Activated CD4-positive, alpha-beta T cell treated with anti-CD3 and anti-CD28 coated beads, Interleukin-2, amount 10 ng/mL, durations not matched to agents 24 days and 14 days (primary cell): ENCODE measurements at regions of chr7 and their contacts with region 1.

Region 1: GRCh38 chr7:7640221-7641128 is at the start of gene UMAD1:
- DNase-seq: peak; percentile 99
- H3K4me3 Mint-ChIP-seq: peak within 1 kb of the TSS; percentile 97
- H3K27ac Mint-ChIP-seq: peak within 1 kb of the TSS; percentile 97
- H3K4me1 Mint-ChIP-seq: peaks cover 31% of the 10 kb centered on the region
- H3K27me3 Mint-ChIP-seq: no peaks in the 10 kb centered on the region
- total RNA-seq, gene UMAD1: 11.8 and 12.4 TPM in 2 replicates

Region 2: DNA sequence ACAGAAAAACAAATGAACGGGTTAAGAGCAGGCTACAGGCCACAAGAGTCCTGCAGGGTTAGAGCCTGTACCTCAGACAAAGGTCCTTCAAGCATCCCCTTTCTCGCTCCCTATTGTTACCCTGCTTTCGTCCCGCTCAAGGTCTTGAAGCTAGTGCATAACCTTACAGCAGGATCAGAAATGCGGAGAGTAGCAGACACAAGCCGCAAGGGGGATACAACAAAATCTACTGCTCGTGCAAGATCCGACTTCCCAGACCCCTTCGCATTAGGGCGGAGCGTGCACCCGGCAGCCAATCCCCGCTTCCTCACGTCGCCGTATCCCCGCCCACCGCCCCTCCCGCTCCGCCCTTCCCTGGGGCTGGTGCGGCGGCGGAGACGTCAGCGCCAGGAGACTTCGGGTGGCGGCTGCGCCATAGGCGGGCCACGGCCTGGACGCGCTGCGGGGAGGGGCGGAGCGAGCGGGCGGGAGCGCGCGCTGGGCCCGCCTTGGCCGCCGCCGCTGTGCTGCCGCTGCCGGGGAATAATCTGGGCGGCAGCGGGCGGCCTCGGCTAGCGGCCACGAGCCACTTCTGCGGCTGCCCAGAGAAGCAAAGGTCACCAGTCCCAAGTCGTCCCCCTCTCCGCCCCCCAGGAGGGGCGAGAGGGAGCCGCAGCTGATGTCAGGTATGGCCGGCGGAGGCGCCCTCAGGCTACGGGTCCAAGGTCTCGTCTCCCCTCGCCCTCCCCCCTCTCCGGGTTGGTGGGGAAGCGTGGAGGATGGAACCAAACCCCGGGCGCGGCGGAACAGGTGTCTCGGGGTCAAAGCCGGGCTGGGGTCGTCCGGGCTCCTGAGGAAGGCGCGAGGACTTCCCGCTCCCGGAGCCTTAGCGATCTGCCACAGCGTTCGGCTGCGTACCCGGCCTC is 458.1 kb before region 1 on chr7 and contains the start of gene C1GALT1:
- intact Hi-C with region 1: loop called (anchors 1 kb)
- DNase-seq: peak; percentile 98
- H3K4me3 Mint-ChIP-seq: peak within 1 kb of the TSS; percentile 96
- H3K27ac Mint-ChIP-seq: peak within 1 kb of the TSS; percentile 99
- H3K4me1 Mint-ChIP-seq: peaks cover 27% of the 10 kb centered on the region
- H3K27me3 Mint-ChIP-seq: no peaks in the 10 kb centered on the region
- total RNA-seq, gene C1GALT1: 37.2 and 39.3 TPM in 2 replicates

Region 3: DNA sequence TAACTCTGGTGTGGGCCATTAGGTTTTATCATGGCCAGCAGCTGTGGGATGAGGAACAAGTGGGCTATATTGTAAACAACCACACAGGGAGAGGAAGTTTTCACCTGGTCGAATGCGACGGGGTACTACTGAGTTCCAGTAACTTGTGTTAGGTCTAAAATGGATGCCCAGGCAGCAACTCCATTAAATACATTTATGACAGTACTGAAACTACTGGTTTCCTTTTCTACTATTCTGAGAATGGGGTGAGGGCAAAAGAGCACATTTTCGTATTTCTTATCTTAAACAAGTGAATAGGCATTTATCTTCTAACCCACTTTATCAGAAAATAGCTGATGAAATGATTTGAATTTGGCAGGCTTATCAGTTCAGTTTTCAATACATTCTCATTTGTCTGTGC is 348.4 kb before region 1 on chr7:
- intact Hi-C with region 1: no loop called
- DNase-seq: no peak
- H3K4me3 Mint-ChIP-seq: no peak overlapping the region
- H3K27ac Mint-ChIP-seq: no peak overlapping the region
- H3K4me1 Mint-ChIP-seq: no peaks in the 10 kb centered on the region
- H3K27me3 Mint-ChIP-seq: no peaks in the 10 kb centered on the region

Region 4: DNA sequence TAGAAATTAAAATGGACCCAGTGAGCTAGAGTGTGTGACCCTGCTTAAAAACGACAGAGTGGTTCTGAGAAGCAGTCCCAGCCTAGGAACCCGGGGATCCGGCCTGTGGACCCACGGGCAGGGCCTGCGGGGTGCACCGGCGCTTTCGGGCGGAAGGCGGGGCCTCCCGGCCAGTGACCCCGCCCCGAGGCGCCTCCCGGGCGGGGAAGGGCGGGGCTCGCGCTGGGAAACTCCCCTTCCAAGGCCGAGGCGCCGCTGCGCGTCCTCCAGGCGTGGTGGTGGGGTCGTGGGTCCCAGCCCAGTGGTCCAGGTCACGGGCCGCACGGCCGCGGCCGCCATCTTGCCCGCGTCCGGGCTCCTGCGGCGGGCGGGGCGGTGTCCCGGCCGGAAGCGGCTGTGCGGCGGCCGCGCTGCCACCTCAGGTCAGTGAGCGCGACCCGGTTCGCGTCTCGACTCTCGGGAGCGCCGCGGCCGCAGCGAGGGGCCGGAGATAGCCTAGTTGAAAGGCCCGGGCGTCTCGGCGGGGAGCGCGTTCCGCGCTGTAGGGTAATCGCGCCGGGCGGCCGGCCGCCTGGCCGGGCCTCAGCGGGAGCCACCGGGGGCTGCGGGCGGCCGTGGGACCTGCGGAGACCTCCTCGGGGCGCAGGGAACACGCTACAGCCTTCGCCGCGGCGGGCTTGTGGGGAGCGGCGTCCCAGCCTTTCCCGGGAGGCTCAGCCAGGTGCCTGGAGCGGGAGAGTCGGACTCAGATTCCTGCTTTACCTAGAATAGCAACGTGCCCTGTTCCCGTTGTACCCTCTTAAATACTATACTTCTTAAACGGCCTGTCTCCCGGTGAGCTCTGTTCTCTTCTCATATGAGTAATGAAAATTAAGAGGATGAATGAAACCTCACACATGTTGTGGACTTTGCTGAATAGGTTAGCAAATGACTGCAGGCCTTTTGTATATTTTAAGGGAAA is 73.5 kb before region 1 on chr7 and contains the start of gene MIOS:
- intact Hi-C with region 1: loop called (anchors 1 kb)
- DNase-seq: peak; percentile 96
- H3K4me3 Mint-ChIP-seq: peak within 1 kb of the TSS; percentile 84
- H3K27ac Mint-ChIP-seq: peak within 1 kb of the TSS; percentile 79
- H3K4me1 Mint-ChIP-seq: peaks cover 23% of the 10 kb centered on the region
- H3K27me3 Mint-ChIP-seq: no peaks in the 10 kb centered on the region
- total RNA-seq, gene MIOS: 33.3 and 34.7 TPM in 2 replicates

Region 5: GRCh38 chr7:7595451-7595850 is 45.0 kb before region 1 on chr7:
- intact Hi-C with region 1: no loop called
- DNase-seq: no peak
- H3K4me3 Mint-ChIP-seq: no peak overlapping the region
- H3K27ac Mint-ChIP-seq: no peak overlapping the region
- H3K4me1 Mint-ChIP-seq: peaks cover 3% of the 10 kb centered on the region
- H3K27me3 Mint-ChIP-seq: no peaks in the 10 kb centered on the region

Region 6: DNA sequence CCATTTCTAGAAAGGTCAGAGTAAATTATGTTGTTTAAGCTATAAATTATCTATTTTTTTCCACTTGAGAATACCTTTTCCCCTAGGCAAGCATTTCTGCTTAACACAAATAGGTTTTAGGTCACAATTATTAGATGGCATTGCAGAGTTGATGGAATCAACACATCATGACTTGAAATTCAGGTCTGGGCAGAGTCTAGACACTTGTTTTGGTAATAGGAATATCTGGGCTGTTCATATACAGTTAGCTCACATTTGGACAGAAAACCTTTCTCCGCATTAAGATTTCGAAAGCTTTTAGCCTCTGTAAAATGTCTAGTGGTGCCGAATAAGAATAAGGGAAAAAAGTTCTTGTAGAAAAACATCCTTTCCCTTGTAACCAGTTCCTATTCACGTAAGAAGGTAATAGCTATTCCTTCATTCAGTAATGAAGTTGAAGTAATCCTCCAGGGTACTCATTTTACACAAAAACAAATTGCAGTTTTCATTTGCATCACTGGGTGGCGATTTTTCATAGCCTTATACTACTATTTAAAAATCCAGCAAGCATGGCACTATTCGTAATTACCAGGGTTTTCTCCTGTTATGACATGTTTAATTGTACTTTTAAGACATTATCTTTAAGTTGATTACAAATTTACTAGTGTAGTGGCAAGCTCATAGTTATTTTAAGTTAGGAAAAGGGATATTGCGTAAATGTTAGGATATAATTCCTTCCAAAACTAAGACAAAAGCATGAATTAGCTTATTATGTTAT is 40.9 kb after region 1 on chr7:
- intact Hi-C with region 1: loop called (anchors 2 kb)
- DNase-seq: peak; percentile 84
- H3K4me3 Mint-ChIP-seq: no peak overlapping the region
- H3K27ac Mint-ChIP-seq: no peak overlapping the region
- H3K4me1 Mint-ChIP-seq: peaks cover 8% of the 10 kb centered on the region
- H3K27me3 Mint-ChIP-seq: no peaks in the 10 kb centered on the region

Region 7: GRCh38 chr7:7707806-7708205 is 67.3 kb after region 1 on chr7:
- intact Hi-C with region 1: no loop called
- DNase-seq: no peak
- H3K4me3 Mint-ChIP-seq: no peak overlapping the region
- H3K27ac Mint-ChIP-seq: no peak overlapping the region
- H3K4me1 Mint-ChIP-seq: peaks cover 6% of the 10 kb centered on the region
- H3K27me3 Mint-ChIP-seq: no peaks in the 10 kb centered on the region

Region 8: DNA sequence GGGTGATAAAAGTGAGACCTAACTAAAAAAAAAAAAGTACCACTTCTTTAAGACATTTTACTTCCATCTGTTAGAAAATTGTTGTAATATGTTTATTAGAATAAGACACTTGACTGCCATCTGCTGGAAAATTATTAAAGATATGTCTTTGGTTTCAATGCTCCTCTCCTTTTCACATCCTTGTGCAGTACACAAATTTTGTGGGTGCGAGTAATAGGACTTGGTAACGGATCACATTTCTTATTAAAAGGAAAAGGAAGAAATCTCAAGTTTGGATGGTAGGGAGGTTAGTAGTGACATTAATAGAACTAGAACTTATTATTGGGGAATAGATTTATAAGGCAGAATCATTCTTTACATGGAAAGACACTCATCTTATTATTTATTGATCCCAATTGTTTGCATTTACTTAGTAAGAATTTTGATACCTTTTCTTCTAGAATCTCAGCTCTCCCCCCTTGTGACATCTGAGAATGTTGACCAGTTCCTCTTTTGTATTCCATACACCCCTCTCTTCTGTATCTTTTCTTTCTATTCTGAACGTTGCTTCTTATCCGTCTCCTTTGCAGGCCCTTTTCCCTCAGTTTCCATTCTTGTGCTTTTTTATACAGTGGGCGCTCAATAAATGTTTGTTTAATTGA is 121.0 kb after region 1 on chr7:
- intact Hi-C with region 1: loop called (anchors 1 kb)
- DNase-seq: peak; percentile 59
- H3K4me3 Mint-ChIP-seq: peak overlapping the region; percentile 92
- H3K27ac Mint-ChIP-seq: peak overlapping the region; percentile 88
- H3K4me1 Mint-ChIP-seq: peaks cover 30% of the 10 kb centered on the region
- H3K27me3 Mint-ChIP-seq: no peaks in the 10 kb centered on the region

Region 9: GRCh38 chr7:8134089-8134733 is 493.7 kb after region 1 on chr7:
- intact Hi-C with region 1: loop called (anchors 2 kb)
- DNase-seq: peak; percentile 81
- H3K4me3 Mint-ChIP-seq: peak overlapping the region; percentile 42
- H3K27ac Mint-ChIP-seq: peak overlapping the region; percentile 65
- H3K4me1 Mint-ChIP-seq: peaks cover 52% of the 10 kb centered on the region
- H3K27me3 Mint-ChIP-seq: no peaks in the 10 kb centered on the region